Left ventricle myocardium inferior (tissue), 1 donor: ENCODE measurements at regions of chr5 and their contacts with region 1.

Region 1: GRCh38 chr5:131589510-131590348 is 45.3 kb downstream of the RAPGEF6 start:
- DNase-seq: no peak
- H3K4me3 ChIP-seq: no peak overlapping the region
- H3K27ac ChIP-seq: no peak overlapping the region
- H3K4me1 ChIP-seq: peaks cover 28% of the 10 kb centered on the region
- H3K27me3 ChIP-seq: no peaks in the 10 kb centered on the region
- CTCF ChIP-seq: peak; percentile 92

Region 2: DNA sequence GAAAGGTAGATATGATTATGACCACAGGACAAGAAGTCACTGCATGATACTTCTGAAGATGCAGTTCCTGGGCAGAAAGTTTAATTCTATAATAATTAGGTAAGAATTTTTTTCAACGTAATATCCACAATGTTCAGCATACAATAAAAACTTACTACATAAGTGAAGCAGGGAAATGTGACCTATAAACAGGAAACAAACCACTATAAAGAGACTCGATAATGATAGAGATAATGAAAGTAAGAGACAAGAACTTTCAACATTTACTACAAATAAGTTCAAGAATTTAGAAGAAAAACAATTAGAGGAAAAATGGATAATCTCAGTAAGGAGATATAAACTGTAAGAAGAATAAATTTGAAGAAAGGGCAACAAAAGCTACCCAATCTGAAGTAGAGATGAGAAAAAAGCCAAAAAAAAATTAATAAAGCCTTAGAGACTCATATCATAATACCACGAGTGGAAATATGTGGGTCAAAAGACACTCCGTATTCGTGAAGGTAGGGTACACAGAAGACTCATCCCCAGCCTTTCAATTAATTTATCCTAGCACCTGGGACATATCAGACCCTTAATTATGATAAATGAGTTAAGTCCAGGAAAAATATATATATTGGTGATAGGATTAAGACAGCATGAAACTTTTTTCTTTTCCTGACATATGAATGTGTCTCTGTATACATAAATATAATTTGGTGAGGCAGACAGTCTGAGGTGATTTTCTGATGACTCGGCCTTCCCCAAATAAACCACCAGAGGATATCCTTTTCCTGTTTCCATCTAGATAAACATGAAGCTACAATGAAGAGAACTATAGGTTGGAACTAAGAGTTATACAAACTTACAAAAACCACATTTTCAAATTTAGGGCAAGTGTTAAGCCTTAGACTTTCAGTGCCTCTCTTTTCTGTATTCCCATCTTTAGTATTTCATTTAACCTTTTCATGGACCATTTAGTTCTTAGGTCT is 75.1 kb before region 1 on chr5:
- intact Hi-C with region 1: no loop called
- DNase-seq: no peak
- H3K4me3 ChIP-seq: peak overlapping the region; percentile 40
- H3K27ac ChIP-seq: peak overlapping the region; percentile 64
- H3K4me1 ChIP-seq: peaks cover 18% of the 10 kb centered on the region
- H3K27me3 ChIP-seq: no peaks in the 10 kb centered on the region
- CTCF ChIP-seq: peak; percentile 19

Region 3: DNA sequence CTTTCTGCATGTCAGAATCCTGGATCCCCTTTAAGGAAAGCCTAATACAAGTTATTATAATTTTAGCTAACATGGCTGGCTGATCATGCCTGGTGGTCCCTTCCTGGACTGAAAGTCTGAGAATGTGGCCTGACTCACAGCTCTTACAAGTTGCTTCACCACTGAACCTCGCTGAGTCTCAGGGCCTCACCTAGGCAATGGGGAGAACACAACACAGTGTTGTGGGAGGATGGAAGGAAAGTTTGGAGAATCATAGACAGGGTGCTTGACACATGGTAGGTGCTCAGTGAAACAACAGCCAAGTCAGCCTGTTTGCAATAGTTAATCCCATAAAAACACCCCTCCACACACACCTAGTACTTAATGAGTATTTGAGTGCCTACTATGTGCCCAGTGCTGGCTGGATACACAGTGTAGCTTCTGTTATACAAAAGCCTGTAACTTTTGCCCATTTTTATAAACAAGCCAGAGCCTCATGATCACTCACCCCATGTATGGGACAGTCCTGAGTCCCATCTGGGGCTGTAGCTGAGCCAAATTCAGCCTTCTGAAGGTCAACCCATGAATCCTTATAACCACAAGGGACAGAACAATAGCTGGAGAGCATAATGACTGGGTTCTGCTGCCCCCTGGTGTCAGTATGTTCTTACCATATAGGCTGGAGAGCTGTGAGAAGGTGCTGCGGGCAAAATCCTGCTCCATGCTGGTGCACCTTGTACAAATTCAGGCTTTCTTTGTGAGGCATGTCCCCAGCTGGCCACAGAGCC is 417.9 kb after region 1 on chr5:
- intact Hi-C with region 1: loop called (anchors 5 kb)
- DNase-seq: peak; percentile 68
- H3K4me3 ChIP-seq: no peak overlapping the region
- H3K27ac ChIP-seq: no peak overlapping the region
- H3K4me1 ChIP-seq: peaks cover 46% of the 10 kb centered on the region
- H3K27me3 ChIP-seq: peaks cover 24% of the 10 kb centered on the region
- CTCF ChIP-seq: peak; percentile 82